Activated CD4-positive, alpha-beta T cell treated with anti-CD3 and anti-CD28 coated beads for 36 hours (primary cell): ENCODE measurements at regions of chr15 and their contacts with region 1.

Region 1: GRCh38 chr15:42084460-42085235 is 9.7 kb downstream of the PLA2G4D start:
- DNase-seq: peak; percentile 70
- ATAC-seq: peak; percentile 85
- H3K4me3 Mint-ChIP-seq: no peak overlapping the region
- H3K27ac Mint-ChIP-seq: no peak overlapping the region
- H3K4me1 Mint-ChIP-seq: peaks cover 3% of the 10 kb centered on the region
- H3K27me3 Mint-ChIP-seq: peaks cover 2% of the 10 kb centered on the region

Region 2: GRCh38 chr15:42073418-42073817 is 11.2 kb before region 1 on chr15:
- CTCF ChIA-PET with region 1: interaction called, 20 read pairs
- POLR2A ChIA-PET with region 1: no interaction called
- intact Hi-C with region 1: no loop called
- DNase-seq: no peak
- ATAC-seq: no peak
- H3K4me3 Mint-ChIP-seq: no peak overlapping the region
- H3K27ac Mint-ChIP-seq: no peak overlapping the region
- H3K4me1 Mint-ChIP-seq: no peaks in the 10 kb centered on the region
- H3K27me3 Mint-ChIP-seq: no peaks in the 10 kb centered on the region

Region 3: GRCh38 chr15:42137431-42138261 is 53.0 kb after region 1 on chr15:
- CTCF ChIA-PET with region 1: interaction called, 10 read pairs
- POLR2A ChIA-PET with region 1: no interaction called
- intact Hi-C with region 1: no loop called
- DNase-seq: peak; percentile 35
- ATAC-seq: no peak
- H3K4me3 Mint-ChIP-seq: no peak overlapping the region
- H3K27ac Mint-ChIP-seq: no peak overlapping the region
- H3K4me1 Mint-ChIP-seq: no peaks in the 10 kb centered on the region
- H3K27me3 Mint-ChIP-seq: no peaks in the 10 kb centered on the region

Region 4: DNA sequence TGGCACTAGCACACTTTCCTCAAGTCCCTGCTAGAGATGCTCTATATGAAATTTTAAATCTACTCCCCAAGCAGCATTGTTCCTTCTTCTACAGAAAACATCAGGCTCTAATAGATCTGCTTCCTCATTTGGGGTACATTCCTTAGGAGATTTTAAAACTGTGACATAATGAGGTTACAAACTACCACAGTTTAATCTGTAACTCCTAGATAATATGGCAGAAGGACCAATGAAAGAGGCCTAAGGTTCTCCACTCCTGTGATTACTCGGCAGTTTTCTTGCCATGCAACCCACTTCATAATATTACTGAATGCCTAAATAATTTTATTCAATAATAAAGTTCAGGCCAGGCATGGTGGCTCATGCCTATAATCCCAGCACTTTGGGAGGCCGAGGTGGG is 390.2 kb after region 1 on chr15:
- CTCF ChIA-PET with region 1: no interaction called
- POLR2A ChIA-PET with region 1: no interaction called
- intact Hi-C with region 1: loop called in 1 of 2 experiments (anchors 10 kb)
- DNase-seq: no peak
- ATAC-seq: no peak
- H3K4me3 Mint-ChIP-seq: no peak overlapping the region
- H3K27ac Mint-ChIP-seq: no peak overlapping the region
- H3K4me1 Mint-ChIP-seq: peaks cover 10% of the 10 kb centered on the region
- H3K27me3 Mint-ChIP-seq: no peaks in the 10 kb centered on the region